ENCODE measurements at regions of chr19 and their contacts with region 1.

Region 1: DNA sequence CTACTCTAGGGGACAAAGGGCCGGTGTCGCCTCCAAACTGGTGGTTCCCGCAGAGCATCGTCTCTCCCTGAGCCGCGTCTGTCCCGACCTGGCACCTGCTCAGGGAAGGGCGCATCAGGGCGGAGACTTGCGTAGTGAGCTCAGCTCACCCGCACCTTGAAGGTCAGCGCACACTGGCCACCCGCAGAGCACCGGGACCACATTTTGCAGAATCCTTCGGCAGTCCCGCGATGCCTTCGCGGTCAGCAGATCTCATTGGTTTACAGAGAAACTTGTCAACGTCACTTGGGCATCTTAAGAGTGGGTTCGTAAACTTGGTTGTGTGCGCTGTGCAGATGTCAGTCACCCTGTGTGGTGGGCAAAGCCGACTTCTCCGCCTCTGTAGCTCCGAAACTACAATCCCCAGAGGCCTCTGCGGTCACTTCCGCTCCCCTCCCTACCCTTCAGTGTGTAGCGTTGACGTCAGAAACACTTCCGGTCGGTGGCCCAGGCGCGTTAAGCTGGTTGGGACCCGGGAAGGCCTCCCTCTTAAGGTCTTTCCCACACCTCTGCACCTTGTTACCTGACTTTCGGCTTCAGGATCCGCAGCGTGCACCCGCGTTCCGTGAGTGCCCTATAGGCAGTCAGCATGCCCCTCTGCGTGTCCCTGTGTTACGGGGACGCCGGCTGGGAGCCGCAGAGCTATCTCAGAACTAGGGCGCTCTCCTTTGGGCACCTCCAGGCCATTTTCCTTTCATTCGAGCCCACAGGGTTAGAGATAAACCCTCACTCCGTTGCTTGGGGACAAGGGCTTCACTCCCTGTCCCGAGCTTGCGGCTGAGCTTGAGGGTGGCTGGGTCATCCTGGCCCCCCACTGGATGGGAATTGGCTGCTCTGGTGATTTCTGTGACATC is 36.5 kb upstream of the ZNF527 start:
- DNase-seq: peak; percentile 56
- H3K4me3 ChIP-seq: peak overlapping the region; percentile 99
- H3K27ac ChIP-seq: peak overlapping the region; percentile 65
- H3K27me3 ChIP-seq: no peaks in the 10 kb centered on the region
- CTCF ChIP-seq: no peak

Region 2: GRCh38 chr19:37313335-37313627 is 21.1 kb before region 1 on chr19:
- CTCF ChIA-PET with region 1: no interaction called
- POLR2A ChIA-PET with region 1: interaction called, 13 read pairs
- DNase-seq: no peak
- H3K4me3 ChIP-seq: no peak overlapping the region
- H3K27ac ChIP-seq: no peak overlapping the region
- H3K27me3 ChIP-seq: no peaks in the 10 kb centered on the region
- CTCF ChIP-seq: no peak